ENCODE measurements at regions of chr10 and their contacts with region 1.

Region 1: GRCh38 chr10:103367782-103368518 is at the start of gene TAF5:
- DNase-seq: peak; percentile 92
- H3K4me3 ChIP-seq: peak within 1 kb of the TSS; percentile 82 to 96
- H3K27ac ChIP-seq: peak within 1 kb of the TSS; percentile 82 to 88
- H3K4me1 ChIP-seq: no peaks in the 10 kb centered on the region
- H3K27me3 ChIP-seq: no peaks in the 10 kb centered on the region
- CTCF ChIP-seq: peak in 3 of 4 experiments; percentile 8 to 37 (median 24)
- POLR2A ChIP-seq: peak; percentile 79
- total RNA-seq, gene TAF5: 3.7 to 16.0 TPM

Region 2: GRCh38 chr10:102853944-102854694 is 513.8 kb before region 1 on chr10 and contains the start of gene BORCS7:
- intact Hi-C with region 1: no loop called
- DNase-seq: peak; percentile 97
- H3K4me3 ChIP-seq: peak within 1 kb of the TSS; percentile 60 to 88
- H3K27ac ChIP-seq: peak within 1 kb of the TSS; percentile 95 to 96
- H3K4me1 ChIP-seq: no peaks in the 10 kb centered on the region
- H3K27me3 ChIP-seq: no peaks in the 10 kb centered on the region
- CTCF ChIP-seq: peak in 2 of 4 experiments; percentile 5 to 26
- POLR2A ChIP-seq: peak; percentile 47
- total RNA-seq, gene BORCS7: 39.0 to 49.4 TPM

Region 3: GRCh38 chr10:103396064-103396788 is 28.3 kb after region 1 on chr10 and contains the starts of genes ATP5MK and PDCD11:
- intact Hi-C with region 1: loop called (anchors 1 kb)
- DNase-seq: peak; percentile 98
- H3K4me3 ChIP-seq: peak within 1 kb of the TSS; percentile 51 to 74
- H3K27ac ChIP-seq: peak within 1 kb of the TSS; percentile 61 to 65
- H3K4me1 ChIP-seq: peaks cover 14% of the 10 kb centered on the region
- H3K27me3 ChIP-seq: no peaks in the 10 kb centered on the region
- CTCF ChIP-seq: peak in 2 of 4 experiments; percentile 11 to 16
- POLR2A ChIP-seq: peak; percentile 38
- total RNA-seq, gene ATP5MK: 206 to 234 TPM
- total RNA-seq, gene PDCD11: 13.3 to 33.8 TPM

Region 4: DNA sequence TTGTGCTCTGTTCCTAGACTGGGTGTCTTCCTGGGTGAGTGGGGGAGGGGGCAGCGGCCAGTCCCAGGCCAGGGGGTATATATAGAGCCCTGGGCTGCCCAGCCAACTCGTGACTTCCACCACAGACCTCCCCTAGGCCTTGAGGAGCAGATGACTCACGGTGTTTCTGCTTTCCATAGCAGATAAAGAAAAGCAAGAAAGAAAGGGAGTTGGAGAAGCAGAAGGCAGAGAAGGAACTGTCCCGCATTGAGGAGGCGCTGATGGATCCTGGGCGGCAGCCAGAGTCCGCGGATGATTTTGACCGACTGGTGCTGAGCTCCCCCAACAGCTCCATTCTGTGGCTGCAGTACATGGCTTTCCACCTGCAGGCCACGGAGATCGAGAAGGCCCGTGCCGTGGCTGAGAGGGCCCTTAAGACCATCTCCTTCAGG is 74.1 kb after region 1 on chr10:
- intact Hi-C with region 1: no loop called
- DNase-seq: no peak
- H3K4me3 ChIP-seq: no peak overlapping the region
- H3K27ac ChIP-seq: no peak overlapping the region
- H3K4me1 ChIP-seq: no peaks in the 10 kb centered on the region
- H3K27me3 ChIP-seq: no peaks in the 10 kb centered on the region
- CTCF ChIP-seq: no peak
- POLR2A ChIP-seq: no peak

Measured in prostate gland (tissue), 2 donors.